MCF 10A (cell line): ENCODE measurements at regions of chr2 and their contacts with region 1.

Region 1: DNA sequence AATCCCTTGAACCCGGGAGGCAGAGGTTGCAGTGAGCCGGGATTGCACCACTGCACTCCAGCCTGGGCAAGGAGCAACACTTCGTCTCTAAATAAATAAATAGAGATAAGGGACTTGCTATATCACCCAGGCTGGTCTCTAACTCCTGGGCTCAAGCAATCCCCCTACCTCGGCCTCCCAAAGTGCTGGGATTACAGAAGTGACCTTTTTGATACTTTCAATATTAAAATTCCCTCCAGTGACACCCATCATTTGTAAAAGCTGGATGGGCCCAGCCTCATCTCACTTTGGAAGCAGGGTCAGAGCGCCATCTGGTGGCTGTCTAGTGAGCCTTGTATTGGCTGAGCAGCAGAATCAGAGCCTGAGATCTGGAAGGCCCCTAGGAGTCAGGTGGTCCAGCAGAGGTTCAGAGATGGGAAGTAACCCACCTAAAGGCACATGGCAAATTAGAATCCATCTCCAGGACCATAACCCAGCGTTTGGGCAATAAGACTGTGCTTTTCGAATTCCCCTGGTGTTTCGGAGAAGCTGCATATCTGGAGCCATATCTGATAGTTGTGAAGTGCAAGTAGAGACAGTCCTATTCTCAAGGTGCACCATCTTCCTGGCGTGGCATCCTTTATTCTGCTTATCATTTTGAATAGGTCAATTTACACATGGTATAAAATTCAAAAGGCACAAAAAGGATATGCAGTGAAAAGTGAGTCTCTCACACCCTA is 18.3 kb upstream of the SLC35F6 start:
- DNase-seq: peak; percentile 88
- H3K4me3 Mint-ChIP-seq: no peak overlapping the region
- H3K27ac Mint-ChIP-seq: no peak overlapping the region
- H3K4me1 Mint-ChIP-seq: no peaks in the 10 kb centered on the region
- H3K27me3 Mint-ChIP-seq: no peaks in the 10 kb centered on the region
- CTCF ChIP-seq: peak; percentile 91

Region 2: GRCh38 chr2:26284136-26284535 is 461.6 kb before region 1 on chr2:
- CTCF ChIA-PET with region 1: no interaction called
- POLR2A ChIA-PET with region 1: no interaction called
- intact Hi-C with region 1: no loop called
- DNase-seq: peak; percentile 64
- H3K4me3 Mint-ChIP-seq: peak overlapping the region; percentile 22
- H3K27ac Mint-ChIP-seq: peak overlapping the region; percentile 47
- H3K4me1 Mint-ChIP-seq: peaks cover 20% of the 10 kb centered on the region
- H3K27me3 Mint-ChIP-seq: no peaks in the 10 kb centered on the region
- CTCF ChIP-seq: no peak

Region 3: GRCh38 chr2:26591619-26592505 is 153.9 kb before region 1 on chr2:
- CTCF ChIA-PET with region 1: interaction called, 19 read pairs
- POLR2A ChIA-PET with region 1: no interaction called
- intact Hi-C with region 1: no loop called
- DNase-seq: no peak
- H3K4me3 Mint-ChIP-seq: no peak overlapping the region
- H3K27ac Mint-ChIP-seq: no peak overlapping the region
- H3K4me1 Mint-ChIP-seq: no peaks in the 10 kb centered on the region
- H3K27me3 Mint-ChIP-seq: peaks cover 77% of the 10 kb centered on the region
- CTCF ChIP-seq: no peak

Region 4: DNA sequence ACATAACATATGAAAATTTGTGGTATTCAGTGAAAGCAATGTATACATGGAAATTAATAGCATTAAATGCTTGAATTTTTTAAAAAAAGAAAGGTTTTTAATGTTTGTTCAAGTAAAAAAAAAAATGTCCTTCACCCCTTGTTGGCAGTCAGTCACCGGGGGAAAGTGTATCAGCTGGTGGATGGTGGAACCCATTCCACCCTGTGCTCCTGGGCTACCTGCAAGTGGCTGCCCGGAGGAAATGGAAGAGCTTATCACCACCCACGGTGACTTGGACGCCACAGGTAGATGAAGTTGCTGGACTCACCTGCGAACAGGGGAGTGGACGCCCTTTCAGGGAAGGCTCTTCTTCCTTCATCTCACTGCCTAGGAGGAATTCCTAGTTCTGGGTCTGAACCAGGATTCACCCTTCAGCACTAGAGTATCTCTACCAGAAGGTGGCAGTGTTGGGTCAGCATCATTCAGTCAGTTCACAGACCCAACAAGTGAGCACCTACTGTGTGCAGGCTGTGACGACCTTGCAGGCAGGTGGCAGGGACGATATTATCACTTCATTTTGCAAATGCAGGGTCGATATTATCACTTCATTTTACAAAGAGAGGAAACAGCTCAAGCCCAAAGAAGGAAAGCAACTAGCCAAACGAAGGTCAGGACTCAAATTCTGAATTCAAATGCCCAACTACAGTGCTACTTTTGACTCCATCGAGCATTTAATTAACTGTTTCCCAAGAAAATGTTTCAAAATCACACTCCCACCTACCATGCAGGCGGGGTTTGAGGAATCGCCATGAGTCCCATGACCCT is 140.4 kb before region 1 on chr2:
- CTCF ChIA-PET with region 1: interaction called, 305 read pairs
- POLR2A ChIA-PET with region 1: interaction called, 12 read pairs
- intact Hi-C with region 1: loop called (anchors 1 kb)
- DNase-seq: peak; percentile 73
- H3K4me3 Mint-ChIP-seq: no peak overlapping the region
- H3K27ac Mint-ChIP-seq: no peak overlapping the region
- H3K4me1 Mint-ChIP-seq: no peaks in the 10 kb centered on the region
- H3K27me3 Mint-ChIP-seq: peaks cover 85% of the 10 kb centered on the region
- CTCF ChIP-seq: peak; percentile 83

Region 5: GRCh38 chr2:26692279-26692896 is 53.4 kb before region 1 on chr2 and contains the start of gene KCNK3:
- CTCF ChIA-PET with region 1: no interaction called
- POLR2A ChIA-PET with region 1: no interaction called
- intact Hi-C with region 1: no loop called
- DNase-seq: no peak
- H3K4me3 Mint-ChIP-seq: no peak within 1 kb of the TSS
- H3K27ac Mint-ChIP-seq: no peak within 1 kb of the TSS
- H3K4me1 Mint-ChIP-seq: peaks cover 11% of the 10 kb centered on the region
- H3K27me3 Mint-ChIP-seq: peaks cover 69% of the 10 kb centered on the region
- CTCF ChIP-seq: no peak
- total RNA-seq, gene KCNK3: not detected in 2 replicates

Region 6: GRCh38 chr2:26717362-26717761 is 28.4 kb before region 1 on chr2:
- CTCF ChIA-PET with region 1: interaction called, 10 read pairs
- POLR2A ChIA-PET with region 1: no interaction called
- intact Hi-C with region 1: no loop called
- DNase-seq: no peak
- H3K4me3 Mint-ChIP-seq: no peak overlapping the region
- H3K27ac Mint-ChIP-seq: no peak overlapping the region
- H3K4me1 Mint-ChIP-seq: peaks cover 4% of the 10 kb centered on the region
- H3K27me3 Mint-ChIP-seq: peaks cover 11% of the 10 kb centered on the region
- CTCF ChIP-seq: no peak